GM13976 (cell line): ENCODE measurements at regions of chr11 and their contacts with region 1.

Region 1: DNA sequence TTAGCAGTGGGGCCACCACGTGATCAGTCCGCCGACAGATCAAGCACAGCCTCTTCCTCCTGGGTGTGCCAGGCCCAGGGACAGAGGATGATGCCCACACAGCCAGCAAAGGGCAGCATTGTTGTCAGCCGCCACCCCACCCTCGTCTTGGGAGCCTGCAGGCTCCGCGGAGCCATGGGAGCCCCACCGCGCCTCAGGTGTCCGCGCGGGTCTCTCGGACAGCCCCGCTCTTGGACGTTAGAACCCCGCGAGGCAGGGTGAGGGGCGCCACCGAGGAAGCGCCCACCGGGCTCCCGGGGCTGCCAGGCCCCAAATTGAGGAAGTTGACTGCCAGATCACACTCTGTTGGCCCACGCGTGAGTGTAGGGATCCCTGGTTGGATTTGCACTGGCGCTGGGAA is 83.9 kb upstream of the MS4A8 start:
- DNase-seq: no peak
- CTCF ChIP-seq: no peak

Region 2: DNA sequence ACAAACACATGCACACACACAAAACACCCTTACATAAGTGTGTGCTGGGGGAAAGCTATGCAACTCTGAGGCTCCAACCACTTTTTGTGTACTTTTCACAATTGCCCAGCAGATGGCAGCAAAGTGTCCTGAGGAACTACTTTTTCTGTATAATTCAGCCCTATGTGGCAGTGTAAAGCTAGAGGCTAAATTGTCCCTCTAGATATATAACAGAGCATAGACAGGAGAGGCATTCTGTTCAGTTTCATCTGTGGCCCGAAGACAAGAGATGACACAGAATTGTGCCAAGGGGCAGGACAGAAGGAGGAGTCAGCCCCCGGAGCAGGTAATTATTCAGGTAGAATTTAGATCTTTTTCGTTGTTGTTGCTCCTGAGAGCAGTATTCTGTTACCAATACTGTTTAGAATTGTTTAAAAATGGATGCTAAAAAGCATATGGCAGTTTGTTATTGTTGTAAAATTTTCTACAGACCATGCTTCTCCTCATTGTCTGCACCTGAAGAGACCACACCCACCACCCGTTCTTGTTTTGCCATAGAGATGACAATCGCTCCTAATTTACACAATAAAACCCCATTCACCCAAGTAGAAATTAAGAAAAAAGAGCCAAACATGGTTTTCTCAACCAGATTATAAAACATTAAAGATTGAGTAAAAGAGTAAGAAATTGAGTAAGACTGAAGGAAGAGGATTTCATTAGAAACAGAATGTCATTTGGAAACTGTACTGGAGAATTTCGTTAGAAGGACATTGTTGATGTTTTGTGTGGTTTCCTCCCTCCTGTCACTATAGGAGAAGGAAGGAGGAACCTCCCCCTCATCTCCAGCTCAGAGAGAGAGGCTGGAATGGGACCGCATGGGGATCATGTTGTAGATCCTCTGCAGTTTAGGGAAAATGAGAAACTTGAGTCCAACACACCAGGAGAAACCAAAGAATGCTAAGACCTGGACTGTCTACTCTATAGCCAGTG is 251.7 kb before region 1 on chr11:
- in situ Hi-C with region 1: loop called (anchors 10 kb)
- DNase-seq: peak; percentile 65
- CTCF ChIP-seq: peak; percentile 76

Region 3: GRCh38 chr11:60841797-60842667 is 226.5 kb after region 1 on chr11 and contains the start of gene CCDC86:
- in situ Hi-C with region 1: no loop called
- DNase-seq: peak; percentile 100
- CTCF ChIP-seq: no peak

Region 4: GRCh38 chr11:61091373-61092279 is 476.1 kb after region 1 on chr11:
- in situ Hi-C with region 1: no loop called
- DNase-seq: peak; percentile 68
- CTCF ChIP-seq: no peak